Posterior vena cava (tissue), 2 donors: ENCODE measurements at regions of chr22 and their contacts with region 1.

Region 1: GRCh38 chr22:47748957-47749356 is 986.5 kb downstream of the TBC1D22A start:
- DNase-seq: no peak

Region 2: DNA sequence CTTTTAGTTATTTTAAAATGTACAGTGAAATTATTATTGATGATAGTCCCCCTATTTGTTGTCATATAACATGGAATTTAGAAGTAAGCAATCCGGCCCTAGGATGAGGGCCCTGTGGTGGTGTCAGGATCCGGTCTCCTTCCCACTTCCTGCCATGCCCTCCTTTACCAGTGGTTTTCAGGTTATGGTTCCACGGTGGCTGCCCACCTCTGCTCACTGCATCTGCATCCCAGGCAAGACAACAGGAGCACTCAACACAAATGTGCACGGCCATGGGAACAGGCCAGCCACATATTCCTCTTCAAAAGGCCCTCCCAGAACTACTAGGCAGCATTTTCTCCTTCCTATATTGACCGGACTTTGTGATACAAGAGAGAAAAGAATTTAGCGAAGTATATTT is 20.7 kb after region 1 on chr22:
- intact Hi-C with region 1: loop called in 1 of 2 experiments (anchors 1 kb)
- DNase-seq: no peak